ENCODE measurements at regions of chr4 and their contacts with region 1.

Region 1: GRCh38 chr4:53161051-53161786 is 204.6 kb downstream of the SCFD2 start:
- DNase-seq: no peak
- H3K4me3 Mint-ChIP-seq: no peak overlapping the region
- H3K27ac Mint-ChIP-seq: no peak overlapping the region
- H3K4me1 Mint-ChIP-seq: no peaks in the 10 kb centered on the region
- H3K27me3 Mint-ChIP-seq: no peaks in the 10 kb centered on the region
- CTCF ChIP-seq: no peak

Region 2: DNA sequence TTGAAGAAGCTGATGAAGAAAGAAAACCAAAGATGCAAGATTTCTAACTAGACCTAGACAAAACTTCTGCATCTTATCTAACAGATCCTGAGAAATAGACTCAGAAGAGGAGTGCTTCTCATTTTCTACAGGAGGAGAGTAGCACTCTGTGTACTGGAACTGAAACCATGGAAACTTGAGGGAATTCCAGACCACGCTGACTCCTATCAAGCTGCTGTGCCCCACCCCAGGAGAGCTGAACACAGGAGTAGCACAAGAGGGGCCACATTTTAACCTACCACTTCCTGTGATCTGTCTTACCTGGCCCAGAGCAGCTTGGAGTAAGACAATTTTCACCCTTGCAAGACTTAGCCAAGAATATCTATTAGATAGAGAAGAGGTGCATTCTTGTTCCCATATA is 44.3 kb before region 1 on chr4:
- CTCF ChIA-PET with region 1: no interaction called
- intact Hi-C with region 1: loop called (anchors 1 kb)
- DNase-seq: no peak
- H3K4me3 Mint-ChIP-seq: no peak overlapping the region
- H3K27ac Mint-ChIP-seq: no peak overlapping the region
- H3K4me1 Mint-ChIP-seq: no peaks in the 10 kb centered on the region
- H3K27me3 Mint-ChIP-seq: no peaks in the 10 kb centered on the region
- CTCF ChIP-seq: no peak

Measured in Calu3 (cell line).